PC-9 (cell line): ENCODE measurements at regions of chr6 and their contacts with region 1.

Region 1: DNA sequence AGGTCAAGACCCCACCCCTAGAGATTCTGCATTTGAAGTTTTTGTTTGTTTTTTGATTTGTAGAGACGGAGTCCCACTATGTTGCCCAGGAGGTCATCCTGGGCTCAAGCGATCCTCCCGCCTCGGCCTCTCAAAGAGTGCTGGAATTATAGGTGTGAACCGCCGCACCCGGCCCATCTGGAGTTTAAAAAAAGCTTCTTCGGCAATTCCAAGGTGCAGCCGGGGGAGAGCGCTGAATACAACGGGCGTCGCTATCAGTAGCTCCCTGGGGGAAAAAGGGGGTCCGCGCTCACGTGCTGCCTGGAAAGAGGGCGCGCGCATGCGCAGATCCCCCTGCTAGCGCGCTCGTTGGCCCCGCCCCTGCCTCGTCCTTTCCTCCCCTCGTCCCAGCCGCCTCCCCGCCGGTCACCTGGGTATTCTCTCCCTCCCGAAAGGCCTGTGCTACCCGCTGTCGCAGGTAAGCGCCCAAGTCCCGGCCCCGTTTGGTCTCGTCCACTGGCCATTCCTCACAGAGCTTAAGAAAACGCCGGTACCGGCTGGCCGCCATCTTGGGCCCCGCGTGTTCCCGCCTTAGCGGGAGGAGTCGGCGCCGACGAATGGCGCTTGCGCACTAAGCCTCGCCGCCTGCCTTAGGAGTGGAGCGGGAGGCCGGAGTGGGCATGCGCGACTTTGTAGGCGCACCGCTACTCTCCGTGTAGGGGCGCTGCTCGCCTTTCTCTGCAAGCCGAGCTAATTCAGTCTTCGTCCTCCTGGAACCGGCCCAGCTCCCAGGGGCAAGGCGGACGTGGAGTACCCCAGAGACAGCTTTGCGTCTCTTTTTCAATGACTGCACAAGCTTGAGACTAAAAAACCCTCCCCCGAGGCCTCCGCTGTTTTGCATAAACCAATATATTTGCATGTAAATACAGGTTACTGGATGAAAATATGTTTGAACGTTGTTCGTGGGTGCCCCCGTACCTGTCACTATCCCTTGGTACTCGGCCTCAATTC is at the start of gene UQCC2:
- DNase-seq: peak; percentile 85 to 95
- H3K4me3 ChIP-seq: peak within 1 kb of the TSS; percentile 74
- H3K27ac ChIP-seq: peak within 1 kb of the TSS; percentile 78
- H3K4me1 ChIP-seq: peaks cover 30% of the 10 kb centered on the region
- H3K27me3 ChIP-seq: no peaks in the 10 kb centered on the region
- CTCF ChIP-seq: peak; percentile 76
- total RNA-seq, gene UQCC2: 71.2 and 72.9 TPM in 2 replicates

Region 2: DNA sequence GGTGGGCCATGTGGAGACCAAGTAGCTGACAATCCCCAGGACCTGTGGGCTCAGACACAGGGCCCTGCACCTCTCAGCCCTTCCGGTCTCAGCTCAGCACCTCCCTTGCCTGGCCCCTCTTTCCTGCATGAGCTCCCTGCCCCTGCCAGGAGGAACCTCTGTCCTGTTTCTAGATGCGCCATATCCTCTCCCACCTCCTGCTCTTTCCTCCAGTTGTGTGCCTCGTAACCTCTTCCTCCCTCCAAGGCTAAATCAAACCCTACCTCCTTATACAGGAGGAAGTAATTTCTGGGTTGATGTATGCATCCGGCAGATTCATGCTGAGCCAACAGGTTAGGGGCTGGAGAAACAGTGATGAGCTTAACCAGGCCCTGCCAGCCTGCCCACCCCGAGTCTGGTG is 59.4 kb before region 1 on chr6:
- CTCF ChIA-PET with region 1: no interaction called
- POLR2A ChIA-PET with region 1: interaction called, 12 read pairs
- intact Hi-C with region 1: no loop called
- DNase-seq: no peak
- H3K4me3 ChIP-seq: no peak overlapping the region
- H3K27ac ChIP-seq: no peak overlapping the region
- H3K4me1 ChIP-seq: no peaks in the 10 kb centered on the region
- H3K27me3 ChIP-seq: no peaks in the 10 kb centered on the region
- CTCF ChIP-seq: no peak

Region 3: DNA sequence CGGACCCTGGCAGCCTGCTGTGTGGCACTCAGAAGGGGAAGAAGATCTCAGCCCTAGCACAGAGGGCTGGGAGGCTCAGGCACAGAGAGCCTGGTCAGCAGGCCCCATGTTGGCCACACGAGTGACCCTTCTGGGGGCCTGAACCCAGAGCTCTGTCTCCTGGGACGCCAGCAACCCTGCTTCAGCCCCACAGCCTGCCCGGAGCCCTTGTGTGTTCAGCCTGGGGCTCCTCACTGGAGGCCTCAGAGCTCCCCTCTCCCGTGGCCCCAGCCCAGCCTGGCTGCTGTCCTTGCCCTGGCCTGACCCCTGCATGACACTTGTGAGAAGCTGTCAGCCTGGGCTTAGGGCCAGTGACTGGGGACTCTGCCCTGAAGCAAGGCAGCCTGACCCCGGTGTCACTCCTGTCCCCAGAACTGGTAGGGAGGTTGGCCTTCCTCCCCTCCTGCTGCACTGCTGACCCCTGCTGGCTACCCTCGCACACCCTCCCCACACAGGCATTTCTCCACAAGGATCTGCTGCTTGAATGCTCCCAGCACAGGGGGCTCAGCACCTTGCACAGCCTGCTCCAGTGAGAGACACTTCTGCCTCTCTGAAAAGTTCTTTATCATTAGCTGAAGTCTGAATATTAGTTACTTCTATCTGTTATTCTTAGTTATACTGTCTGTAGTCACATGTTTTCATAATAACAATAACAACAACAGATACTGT is 50.6 kb after region 1 on chr6:
- CTCF ChIA-PET with region 1: interaction called, 12 read pairs
- POLR2A ChIA-PET with region 1: no interaction called
- intact Hi-C with region 1: loop called (anchors 1 kb)
- DNase-seq: peak; percentile 50 to 77
- H3K4me3 ChIP-seq: no peak overlapping the region
- H3K27ac ChIP-seq: no peak overlapping the region
- H3K4me1 ChIP-seq: peaks cover 14% of the 10 kb centered on the region
- H3K27me3 ChIP-seq: no peaks in the 10 kb centered on the region
- CTCF ChIP-seq: peak; percentile 85

Region 4: GRCh38 chr6:34145161-34146020 is 434.0 kb after region 1 on chr6:
- CTCF ChIA-PET with region 1: no interaction called
- POLR2A ChIA-PET with region 1: interaction called, 12 read pairs
- intact Hi-C with region 1: no loop called
- DNase-seq: peak in 1 of 2 experiments; percentile 33
- H3K4me3 ChIP-seq: peak overlapping the region; percentile 61
- H3K27ac ChIP-seq: no peak overlapping the region
- H3K4me1 ChIP-seq: no peaks in the 10 kb centered on the region
- H3K27me3 ChIP-seq: peaks cover 71% of the 10 kb centered on the region
- CTCF ChIP-seq: no peak